Posterior vena cava (tissue), 2 donors: ENCODE measurements at regions of chr19 and their contacts with region 1.

Region 1: DNA sequence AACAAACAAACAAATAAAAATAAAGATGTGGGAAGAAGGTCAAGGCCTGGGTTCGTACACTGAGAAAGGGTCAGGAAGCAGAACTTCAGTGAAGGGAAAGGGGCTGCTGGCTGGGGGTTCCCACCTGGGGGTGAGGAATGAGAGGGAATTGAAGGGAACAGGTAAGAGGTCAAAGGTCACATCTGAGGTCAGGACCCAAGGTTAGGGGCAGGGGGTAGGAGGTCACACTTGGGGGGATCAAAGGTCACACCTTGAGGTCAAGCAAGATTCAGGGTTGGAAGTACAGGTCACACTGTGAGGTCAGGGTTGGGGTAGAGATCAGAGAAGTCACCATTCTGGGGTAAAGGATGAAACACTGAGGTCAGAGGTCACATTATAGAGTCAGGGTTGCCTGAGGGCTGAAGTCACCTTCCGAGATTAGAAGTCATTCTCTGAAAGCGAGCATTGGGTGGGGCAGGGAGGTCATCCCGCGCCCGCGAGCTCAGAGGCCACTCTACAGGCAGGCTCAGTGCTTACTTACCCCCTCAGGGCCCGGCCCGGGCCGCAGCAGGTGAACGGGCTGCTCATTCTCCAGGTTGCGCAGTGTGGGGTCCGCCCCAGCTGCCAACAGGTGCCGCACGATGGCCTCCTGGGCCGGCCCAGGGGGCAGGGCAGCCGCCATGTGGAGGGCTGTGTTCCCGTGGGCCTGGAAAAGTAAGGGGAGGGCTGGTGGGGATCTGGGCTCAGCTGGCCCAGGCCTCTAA is 10.8 kb downstream of the NFKBID start:
- DNase-seq: no peak

Region 2: GRCh38 chr19:35601971-35602370 is 287.6 kb before region 1 on chr19:
- intact Hi-C with region 1: no loop called
- DNase-seq: no peak

Region 3: GRCh38 chr19:35657904-35658700 is 231.4 kb before region 1 on chr19:
- intact Hi-C with region 1: no loop called
- DNase-seq: no peak

Region 4: GRCh38 chr19:35921012-35921411 is 31.5 kb after region 1 on chr19:
- intact Hi-C with region 1: loop called in 1 of 2 experiments (anchors 5 kb)
- DNase-seq: no peak